Activated T-helper 2 cell treated with anti-CD3 and anti-CD28 coated beads, Interferon-gamma antibody, Interleukin-2, Interleukin-4, amounts not matched to agents 10 μg/mL and 5 μg/mL and 100 μg/mL, durations not matched to agents 14 hours and 24 hours and 36 hours (primary cell): ENCODE measurements at regions of chr3 and their contacts with region 1.

Region 1: DNA sequence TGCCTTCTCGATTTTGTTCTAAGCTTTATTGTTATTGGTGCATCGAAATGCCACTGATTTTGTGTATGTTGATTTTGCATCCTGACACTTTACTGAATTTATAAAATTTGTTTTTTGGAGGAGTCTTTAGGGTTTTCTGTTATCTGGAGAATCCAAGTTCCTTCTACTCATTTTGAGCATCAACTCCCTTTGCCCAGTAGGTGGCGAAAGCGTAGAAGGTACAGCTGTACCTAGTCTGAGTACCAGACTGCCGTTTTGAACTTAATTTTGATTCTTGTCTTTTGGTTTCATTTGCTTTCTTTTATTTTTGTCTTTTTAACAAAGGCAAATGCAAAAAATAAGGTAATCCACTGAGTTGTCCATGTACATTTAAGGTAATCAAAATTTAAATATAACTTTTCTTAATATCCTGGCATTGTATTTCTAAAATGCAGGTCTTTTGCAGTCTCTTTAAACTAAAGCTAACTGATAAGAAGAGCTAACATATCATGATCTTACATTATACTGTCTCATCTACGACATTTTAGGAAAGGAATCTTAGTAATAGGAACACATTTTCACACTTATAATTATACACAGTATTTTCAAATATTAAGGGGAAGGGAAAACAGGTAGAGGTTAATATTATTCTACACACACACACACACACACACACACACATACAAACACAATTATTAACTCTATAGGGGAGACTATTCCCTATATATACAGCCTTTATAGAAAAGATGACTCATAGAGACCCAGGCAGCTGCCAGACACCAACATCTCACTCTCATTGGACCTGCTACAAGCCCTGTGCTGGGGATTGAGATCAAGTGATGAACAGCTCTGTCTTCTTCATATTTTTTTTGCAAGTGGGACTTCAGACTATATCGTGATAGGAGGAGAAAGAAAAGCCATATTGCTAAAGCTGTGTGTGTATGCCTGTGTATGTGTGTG is 71.7 kb downstream of the SYNPR start:
- DNase-seq: no peak
- H3K4me3 Mint-ChIP-seq: no peak overlapping the region
- H3K27ac Mint-ChIP-seq: no peak overlapping the region
- H3K4me1 Mint-ChIP-seq: no peaks in the 10 kb centered on the region
- H3K27me3 Mint-ChIP-seq: peaks cover 11% of the 10 kb centered on the region

Region 2: DNA sequence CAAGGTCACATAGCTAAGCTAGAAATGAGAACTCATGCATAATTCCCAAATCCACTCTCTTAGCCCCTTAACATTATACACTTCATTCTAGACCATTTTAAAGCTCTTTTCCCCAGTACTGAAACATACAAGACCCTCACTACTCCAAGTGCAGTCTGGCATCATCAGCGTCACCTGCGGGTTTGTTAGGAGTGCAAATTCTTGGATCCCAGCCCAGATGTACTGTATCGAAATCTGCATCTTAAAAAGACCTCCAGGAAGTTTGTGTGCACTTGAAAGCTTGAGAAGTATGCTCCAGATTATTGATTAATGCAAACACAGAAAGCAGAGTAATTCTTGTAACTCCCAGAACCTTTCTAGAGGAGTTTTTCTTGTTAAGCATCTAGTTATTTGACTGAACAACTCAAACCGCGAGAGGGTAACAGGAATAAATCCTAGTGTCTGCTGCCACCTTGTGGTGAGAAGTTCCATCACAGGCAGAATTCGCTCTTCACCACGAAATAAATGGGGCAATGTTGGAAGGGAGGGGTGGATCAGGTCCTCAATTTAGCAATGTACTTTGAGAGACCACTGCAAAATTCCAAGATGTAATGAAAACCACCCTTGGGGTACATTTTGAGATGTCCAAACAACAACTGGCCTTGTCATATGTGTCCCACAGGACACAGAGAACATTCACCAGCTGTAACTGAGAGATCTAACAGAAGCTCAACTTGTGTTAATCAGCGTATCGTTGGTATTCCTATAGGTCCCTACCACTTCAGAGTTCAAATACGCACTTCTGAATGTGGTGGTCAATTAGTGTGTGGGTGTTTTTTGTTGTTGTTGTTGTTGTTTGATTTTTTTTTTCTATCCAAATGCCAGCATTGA is 468.7 kb after region 1 on chr3:
- intact Hi-C with region 1: loop called (anchors 1 kb)
- DNase-seq: peak; percentile 23
- H3K4me3 Mint-ChIP-seq: no peak overlapping the region
- H3K27ac Mint-ChIP-seq: no peak overlapping the region
- H3K4me1 Mint-ChIP-seq: no peaks in the 10 kb centered on the region
- H3K27me3 Mint-ChIP-seq: no peaks in the 10 kb centered on the region